AG04449 (cell line): ENCODE measurements at regions of chr16 and their contacts with region 1.

Region 1: DNA sequence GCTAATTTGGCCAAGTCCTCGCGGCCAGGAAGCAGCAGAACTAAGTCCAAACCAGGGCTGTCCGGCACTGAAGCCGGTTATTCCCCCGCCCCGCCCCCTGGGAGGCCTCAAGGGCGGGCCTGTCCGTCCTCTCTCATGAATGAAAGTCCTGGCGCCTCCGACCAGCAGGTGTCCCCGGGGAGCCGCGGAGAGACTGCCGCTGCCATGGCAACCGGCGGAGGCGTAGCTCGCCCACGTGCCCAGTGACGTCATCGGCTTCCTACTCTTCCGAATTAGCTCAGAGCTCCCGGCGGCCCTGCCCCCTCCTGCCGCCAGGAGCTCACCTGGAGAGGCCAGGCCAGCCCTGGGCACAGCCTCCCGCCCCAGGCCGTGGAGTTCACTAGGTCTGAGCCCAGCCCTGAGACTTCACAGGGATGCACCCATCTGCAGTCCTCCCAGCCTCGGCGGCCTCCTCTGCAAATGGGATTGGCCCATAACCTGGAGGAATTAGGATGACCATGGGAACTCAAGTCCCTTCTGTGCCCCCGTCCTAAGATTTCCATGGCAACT is 1.3 kb downstream of the SPATA2L start:
- DNase-seq: peak; percentile 70
- H3K4me3 ChIP-seq: peak overlapping the region; percentile 83
- CTCF ChIP-seq: peak; percentile 76

Region 2: GRCh38 chr16:89507834-89508590 is 192.2 kb before region 1 on chr16 and contains the start of gene SPG7:
- CTCF ChIA-PET with region 1: no interaction called
- POLR2A ChIA-PET with region 1: no interaction called
- DNase-seq: no peak
- H3K4me3 ChIP-seq: peak within 1 kb of the TSS; percentile 63
- CTCF ChIP-seq: no peak

Region 3: DNA sequence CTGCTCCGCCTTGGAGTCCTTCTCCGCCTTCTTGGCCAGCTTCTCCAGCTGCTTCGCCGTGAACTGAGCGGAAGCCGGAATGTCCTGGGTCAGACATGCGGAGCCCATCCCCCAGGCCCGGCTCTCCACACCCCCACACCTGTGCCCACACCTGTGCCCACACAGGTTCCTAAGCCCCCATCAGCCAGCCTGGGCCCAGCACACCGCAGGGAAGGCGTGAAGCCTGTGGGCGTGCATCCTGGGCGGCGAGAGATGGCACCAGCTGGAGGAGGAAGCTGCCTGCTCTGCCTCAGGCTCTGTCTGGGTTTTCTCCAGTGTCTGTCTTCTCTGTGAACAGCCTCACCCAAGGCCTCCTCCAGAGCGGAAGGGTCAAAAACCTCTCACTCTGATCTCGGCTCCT is 48.6 kb before region 1 on chr16:
- CTCF ChIA-PET with region 1: no interaction called
- POLR2A ChIA-PET with region 1: no interaction called
- DNase-seq: no peak
- H3K4me3 ChIP-seq: no peak overlapping the region
- CTCF ChIP-seq: no peak

Region 4: GRCh38 chr16:89686520-89687091 is 13.6 kb before region 1 on chr16 and contains the start of gene CDK10:
- CTCF ChIA-PET with region 1: interaction called, 36 read pairs
- POLR2A ChIA-PET with region 1: interaction called, 8 read pairs
- DNase-seq: no peak
- H3K4me3 ChIP-seq: peak within 1 kb of the TSS; percentile 90
- CTCF ChIP-seq: no peak

Region 5: GRCh38 chr16:89712274-89712781 is 12.2 kb after region 1 on chr16:
- CTCF ChIA-PET with region 1: interaction called, 30 read pairs
- POLR2A ChIA-PET with region 1: interaction called, 3 read pairs
- DNase-seq: no peak
- H3K4me3 ChIP-seq: peak overlapping the region; percentile 62
- CTCF ChIP-seq: no peak

Region 6: GRCh38 chr16:89720813-89721545 is 20.8 kb after region 1 on chr16 and contains the starts of genes VPS9D1 and ZNF276:
- CTCF ChIA-PET with region 1: interaction called, 30 read pairs
- POLR2A ChIA-PET with region 1: interaction called, 5 read pairs
- DNase-seq: no peak
- H3K4me3 ChIP-seq: peak within 1 kb of the TSS; percentile 83
- CTCF ChIP-seq: no peak

Region 7: GRCh38 chr16:89795676-89796075 is 95.5 kb after region 1 on chr16:
- CTCF ChIA-PET with region 1: interaction called, 101 read pairs
- POLR2A ChIA-PET with region 1: no interaction called
- DNase-seq: no peak
- H3K4me3 ChIP-seq: no peak overlapping the region
- CTCF ChIP-seq: no peak